Activated CD4-positive, alpha-beta T cell treated with anti-CD3 and anti-CD28 coated beads, Interleukin-2, amount 10 ng/mL, durations not matched to agents 24 days and 14 days (primary cell): ENCODE measurements at regions of chr2 and their contacts with region 1.

Region 1: GRCh38 chr2:201780674-201781581 is at the start of gene ALS2:
- DNase-seq: peak; percentile 99
- H3K4me3 Mint-ChIP-seq: peak within 1 kb of the TSS; percentile 95
- H3K27ac Mint-ChIP-seq: peak within 1 kb of the TSS; percentile 92
- H3K4me1 Mint-ChIP-seq: peaks cover 22% of the 10 kb centered on the region
- H3K27me3 Mint-ChIP-seq: peaks cover 20% of the 10 kb centered on the region
- total RNA-seq, gene ALS2: 10.7 and 11.3 TPM in 2 replicates

Region 2: GRCh38 chr2:201517094-201517493 is 263.8 kb before region 1 on chr2:
- intact Hi-C with region 1: no loop called
- DNase-seq: no peak
- H3K4me3 Mint-ChIP-seq: no peak overlapping the region
- H3K27ac Mint-ChIP-seq: no peak overlapping the region
- H3K4me1 Mint-ChIP-seq: no peaks in the 10 kb centered on the region
- H3K27me3 Mint-ChIP-seq: no peaks in the 10 kb centered on the region

Region 3: GRCh38 chr2:201642579-201643215 is 138.2 kb before region 1 on chr2:
- intact Hi-C with region 1: loop called (anchors 1 kb)
- DNase-seq: peak; percentile 97
- H3K4me3 Mint-ChIP-seq: peak overlapping the region; percentile 84
- H3K27ac Mint-ChIP-seq: peak overlapping the region; percentile 87
- H3K4me1 Mint-ChIP-seq: peaks cover 14% of the 10 kb centered on the region
- H3K27me3 Mint-ChIP-seq: peaks cover 3% of the 10 kb centered on the region

Region 4: DNA sequence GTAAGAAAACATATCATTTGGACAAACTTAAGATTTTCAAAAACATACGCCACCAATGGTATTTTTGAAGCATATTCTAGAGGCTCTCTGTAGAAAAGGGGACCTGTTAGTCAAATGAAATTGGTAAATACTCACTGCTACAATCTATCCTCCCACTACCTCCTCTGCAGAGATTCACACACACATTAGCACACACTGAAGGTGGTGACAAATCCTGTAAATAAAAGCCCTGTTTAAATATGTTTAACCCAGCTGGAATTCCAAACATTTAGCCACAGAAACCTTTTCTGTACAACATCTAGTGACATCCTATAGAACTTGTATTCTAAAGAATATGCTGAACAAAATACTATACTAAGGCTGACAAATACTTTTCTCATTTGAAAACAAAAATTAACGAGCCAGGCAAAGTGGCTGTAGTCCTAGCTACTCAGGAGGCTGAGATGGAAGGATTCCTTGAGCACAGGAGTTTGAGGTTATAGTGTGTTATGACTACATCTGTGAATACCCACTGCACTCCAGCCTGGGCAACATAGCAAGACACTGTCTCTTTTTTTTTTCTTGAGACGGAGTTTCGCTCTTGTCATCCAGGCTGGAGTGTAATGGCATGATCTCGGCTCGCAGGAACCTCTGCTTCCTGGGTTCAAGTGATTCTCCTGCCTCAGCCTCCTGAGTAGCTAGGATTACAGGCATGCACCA is 26.1 kb before region 1 on chr2:
- intact Hi-C with region 1: no loop called
- DNase-seq: no peak
- H3K4me3 Mint-ChIP-seq: no peak overlapping the region
- H3K27ac Mint-ChIP-seq: no peak overlapping the region
- H3K4me1 Mint-ChIP-seq: no peaks in the 10 kb centered on the region
- H3K27me3 Mint-ChIP-seq: no peaks in the 10 kb centered on the region

Region 5: DNA sequence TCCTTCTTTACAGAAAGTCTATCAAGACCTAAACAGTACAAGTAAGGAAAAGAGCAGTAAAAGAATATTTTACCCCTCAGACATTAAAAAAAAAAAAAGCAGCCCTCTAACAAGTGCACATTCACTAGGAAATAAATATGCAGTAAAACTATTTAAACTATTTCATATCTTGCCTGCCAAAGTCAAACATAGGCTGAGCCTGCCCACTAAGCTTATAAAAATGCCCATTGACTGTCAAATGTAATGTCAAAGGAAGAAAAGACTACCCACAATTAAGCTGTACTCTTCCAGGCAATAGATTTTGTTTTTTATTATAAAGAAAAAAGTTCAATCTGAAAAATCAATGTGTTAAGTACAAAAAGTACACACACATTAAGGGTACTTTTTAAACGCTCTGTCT is 12.0 kb before region 1 on chr2:
- intact Hi-C with region 1: no loop called
- DNase-seq: no peak
- H3K4me3 Mint-ChIP-seq: no peak overlapping the region
- H3K27ac Mint-ChIP-seq: no peak overlapping the region
- H3K4me1 Mint-ChIP-seq: no peaks in the 10 kb centered on the region
- H3K27me3 Mint-ChIP-seq: no peaks in the 10 kb centered on the region